AG04450 (cell line): ENCODE measurements at regions of chr15 and their contacts with region 1.

Region 1: GRCh38 chr15:51776952-51777574 is 25.7 kb downstream of the TMOD2 start:
- DNase-seq: peak; percentile 58
- H3K4me3 ChIP-seq: no peak overlapping the region
- H3K27ac ChIP-seq: no peak overlapping the region
- H3K27me3 ChIP-seq: no peaks in the 10 kb centered on the region
- CTCF ChIP-seq: peak; percentile 84

Region 2: DNA sequence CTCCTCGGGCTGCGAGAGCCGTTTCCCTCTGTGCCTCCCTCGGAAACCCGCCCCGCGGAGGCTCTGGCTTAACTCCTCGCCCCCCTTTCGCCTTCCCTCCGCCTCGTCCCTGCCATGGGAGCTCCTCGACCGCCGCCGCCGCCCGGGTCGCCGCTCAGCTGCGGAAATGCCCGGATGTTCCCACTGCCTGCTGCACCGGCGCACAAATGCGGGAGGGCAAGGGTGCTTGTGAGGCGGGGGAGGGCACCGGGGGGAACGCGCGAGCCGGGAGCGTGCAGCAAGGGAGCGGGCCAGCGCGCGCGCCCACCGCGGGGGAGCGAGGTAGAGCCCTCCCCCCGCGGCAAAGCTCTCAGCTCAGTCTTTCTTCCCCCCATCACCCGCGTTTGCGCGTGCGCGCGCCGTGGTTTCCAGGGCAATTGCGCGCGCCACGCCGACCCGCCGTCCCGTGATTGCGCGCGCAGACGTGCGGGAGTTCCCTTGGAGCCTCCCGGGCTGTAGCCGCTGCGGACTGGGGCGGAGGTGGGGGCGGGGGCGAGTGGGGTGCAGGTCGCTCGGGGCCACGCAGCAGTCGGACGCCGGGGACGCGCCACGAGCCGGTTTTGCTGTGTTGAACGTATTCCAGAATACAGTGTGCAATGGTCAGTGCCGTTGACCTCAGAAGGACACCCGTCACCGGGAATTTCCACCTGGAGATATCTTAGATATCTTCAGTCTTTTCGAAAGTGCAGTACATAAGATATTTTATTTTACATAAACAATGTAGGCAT is 154.3 kb before region 1 on chr15 and contains the start of gene DMXL2:
- CTCF ChIA-PET with region 1: interaction called, 24 read pairs
- POLR2A ChIA-PET with region 1: no interaction called
- DNase-seq: peak; percentile 71
- H3K4me3 ChIP-seq: peak within 1 kb of the TSS; percentile 79
- H3K27ac ChIP-seq: peak within 1 kb of the TSS; percentile 73
- H3K27me3 ChIP-seq: peaks cover 6% of the 10 kb centered on the region
- CTCF ChIP-seq: no peak
- polyA plus RNA-seq, gene DMXL2: 18.2 and 18.6 TPM in 2 replicates

Region 3: DNA sequence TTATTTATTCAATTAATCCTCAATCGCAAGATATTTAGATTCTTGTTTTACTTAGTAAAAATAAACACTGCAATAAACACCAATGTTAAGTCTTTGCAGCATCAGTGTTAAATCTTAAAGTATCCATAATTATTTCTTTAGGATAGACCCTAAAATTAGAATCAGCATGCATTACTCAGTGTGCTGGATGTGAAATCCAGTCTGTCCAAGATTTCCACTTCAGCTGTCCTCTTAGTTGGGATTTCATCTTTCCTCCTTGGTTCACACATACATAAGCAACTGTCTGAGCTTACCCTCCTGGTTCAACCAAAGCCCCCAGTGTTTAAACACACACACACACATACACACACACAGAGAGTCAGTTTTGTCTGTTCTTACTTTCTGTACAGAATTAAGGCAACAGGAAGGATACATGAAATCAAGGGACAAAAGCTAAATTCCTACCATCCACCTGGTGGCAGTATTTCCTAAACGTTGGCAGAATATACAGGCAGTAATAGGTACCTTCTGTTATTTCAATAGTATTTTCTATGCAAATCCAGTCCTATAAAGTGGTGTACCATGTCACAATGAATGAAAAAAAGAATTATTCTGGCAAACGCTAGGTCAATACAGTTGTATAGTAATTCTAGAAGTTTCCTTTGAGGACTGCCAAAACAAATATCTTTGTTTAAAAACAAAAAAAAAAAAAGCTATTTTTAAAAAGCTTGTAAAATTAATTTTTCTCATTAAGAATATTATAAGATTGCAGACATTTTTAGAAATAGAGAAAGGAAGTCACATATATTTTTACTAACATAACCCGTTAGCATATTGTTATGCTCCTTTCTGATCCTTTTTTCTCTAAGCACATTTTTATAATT is 127.2 kb before region 1 on chr15:
- CTCF ChIA-PET with region 1: interaction called, 490 read pairs
- POLR2A ChIA-PET with region 1: interaction called, 6 read pairs
- DNase-seq: peak; percentile 50
- H3K4me3 ChIP-seq: no peak overlapping the region
- H3K27ac ChIP-seq: no peak overlapping the region
- H3K27me3 ChIP-seq: peaks cover 4% of the 10 kb centered on the region
- CTCF ChIP-seq: peak; percentile 83

Region 4: DNA sequence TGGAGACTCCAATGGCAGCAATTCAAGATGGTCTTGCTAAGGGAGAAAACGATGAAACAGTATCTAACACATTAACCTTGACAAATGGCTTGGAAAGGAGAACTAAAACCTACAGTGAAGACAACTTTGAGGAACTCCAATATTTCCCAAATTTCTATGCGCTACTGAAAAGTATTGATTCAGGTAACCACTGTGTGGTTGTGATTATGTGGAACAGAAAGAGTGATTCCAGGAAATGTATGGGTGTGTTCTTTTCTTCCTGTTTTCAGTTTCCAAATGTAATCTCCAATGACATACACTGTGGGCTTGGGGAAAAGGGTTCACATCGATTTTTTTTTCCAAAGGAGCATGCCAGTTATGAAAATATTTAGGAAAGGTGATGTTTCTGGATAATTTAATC is 84.9 kb before region 1 on chr15:
- CTCF ChIA-PET with region 1: interaction called, 13 read pairs
- POLR2A ChIA-PET with region 1: no interaction called
- DNase-seq: no peak
- H3K4me3 ChIP-seq: no peak overlapping the region
- H3K27ac ChIP-seq: no peak overlapping the region
- H3K27me3 ChIP-seq: peaks cover 9% of the 10 kb centered on the region
- CTCF ChIP-seq: no peak

Region 5: GRCh38 chr15:51737280-51738017 is 39.6 kb before region 1 on chr15 and contains the start of gene LYSMD2:
- CTCF ChIA-PET with region 1: interaction called, 16 read pairs
- POLR2A ChIA-PET with region 1: no interaction called
- DNase-seq: no peak
- H3K4me3 ChIP-seq: peak within 1 kb of the TSS; percentile 69
- H3K27ac ChIP-seq: no peak within 1 kb of the TSS
- H3K27me3 ChIP-seq: no peaks in the 10 kb centered on the region
- CTCF ChIP-seq: no peak
- polyA plus RNA-seq, gene LYSMD2: 6.5 and 10.2 TPM in 2 replicates